ENCODE measurements at regions of chr6 and their contacts with region 1.

Region 1: GRCh38 chr6:3929281-3929798 is 80.2 kb downstream of the FAM50B start:
- DNase-seq: peak; percentile 88

Region 2: GRCh38 chr6:3852391-3852790 is 76.9 kb before region 1 on chr6:
- intact Hi-C with region 1: loop called in 1 of 2 experiments (anchors 2 kb)
- DNase-seq: no peak

Region 3: GRCh38 chr6:3867641-3868502 is 61.5 kb before region 1 on chr6:
- intact Hi-C with region 1: no loop called
- DNase-seq: no peak

Region 4: GRCh38 chr6:3913077-3913957 is 16.0 kb before region 1 on chr6:
- intact Hi-C with region 1: no loop called
- DNase-seq: no peak

Region 5: GRCh38 chr6:5085193-5085647 is 1155.9 kb after region 1 on chr6 and contains the start of gene PPP1R3G:
- intact Hi-C with region 1: no loop called
- DNase-seq: peak; percentile 87
- total RNA-seq, gene PPP1R3G: 2.8 to 4.2 TPM